ENCODE measurements at regions of chr10 and their contacts with region 1.

Region 1: GRCh38 chr10:116521404-116522290 is 24.1 kb upstream of the PNLIP start:
- DNase-seq: peak; percentile 30
- H3K4me3 ChIP-seq: no peak overlapping the region
- H3K27ac ChIP-seq: no peak overlapping the region
- H3K4me1 ChIP-seq: no peaks in the 10 kb centered on the region
- H3K27me3 ChIP-seq: no peaks in the 10 kb centered on the region
- CTCF ChIP-seq: peak; percentile 73 to 77

Region 2: DNA sequence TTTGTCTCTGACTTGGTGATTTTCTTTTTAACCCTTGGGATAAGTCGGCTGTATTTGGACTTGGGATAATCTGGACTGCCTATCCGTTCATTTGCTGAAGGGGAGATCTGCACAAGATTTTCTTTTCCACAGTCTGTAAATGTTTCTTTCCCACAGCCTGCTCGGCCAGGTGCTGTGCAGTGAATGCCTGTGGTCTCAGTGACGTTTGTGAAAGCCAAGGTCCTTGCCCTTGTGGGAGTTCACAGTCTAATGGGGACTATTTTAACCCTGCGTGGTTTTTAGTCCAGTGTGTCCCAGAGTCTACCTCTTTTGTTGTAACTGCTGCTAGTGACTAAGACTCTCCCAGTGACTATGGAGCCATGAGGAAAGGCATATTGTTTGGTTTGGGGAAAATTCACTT is 33.0 kb after region 1 on chr10:
- CTCF ChIA-PET with region 1: no interaction called
- dilution Hi-C with region 1: loop called (anchors 5 kb)
- in situ Hi-C with region 1: no loop called
- intact Hi-C with region 1: no loop called
- DNase-seq: no peak
- H3K4me3 ChIP-seq: no peak overlapping the region
- H3K27ac ChIP-seq: no peak overlapping the region
- H3K4me1 ChIP-seq: no peaks in the 10 kb centered on the region
- H3K27me3 ChIP-seq: peaks cover 2% of the 10 kb centered on the region
- CTCF ChIP-seq: no peak